ENCODE measurements at regions of chr6 and their contacts with region 1.

Region 1: GRCh38 chr6:105992315-105992961 is 93.7 kb upstream of the PRDM1 start:
- DNase-seq: peak; percentile 98
- H3K4me3 Mint-ChIP-seq: peak overlapping the region; percentile 93
- H3K27ac Mint-ChIP-seq: peak overlapping the region; percentile 91
- H3K4me1 Mint-ChIP-seq: peaks cover 45% of the 10 kb centered on the region
- H3K27me3 Mint-ChIP-seq: peaks cover 37% of the 10 kb centered on the region

Region 2: DNA sequence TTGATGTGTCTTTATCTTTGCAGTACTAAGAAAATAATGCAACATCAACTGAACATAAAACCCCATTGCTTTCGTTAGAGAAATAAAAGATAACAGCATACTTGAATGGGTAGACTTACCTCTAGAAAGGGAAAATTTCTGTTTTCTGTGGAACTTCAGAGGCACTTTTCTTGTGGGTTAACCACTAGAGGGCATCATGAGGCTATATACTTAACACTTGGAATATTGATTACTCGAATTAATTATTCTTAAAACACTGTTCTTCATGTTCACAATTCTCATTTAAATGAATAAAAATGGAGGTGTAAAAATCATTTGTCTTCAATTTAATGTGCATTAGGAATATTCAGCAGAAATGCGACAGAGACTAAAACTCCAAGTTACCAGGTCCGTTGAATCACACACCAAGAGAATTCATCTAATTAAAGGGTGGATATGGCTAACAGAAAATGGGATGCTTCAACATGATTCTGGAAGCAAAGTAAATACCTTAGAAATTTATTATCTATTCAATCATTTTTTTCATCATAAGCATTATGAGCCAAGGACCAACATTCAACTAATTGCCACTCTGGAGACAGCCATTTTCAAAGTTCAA is 258.8 kb before region 1 on chr6:
- intact Hi-C with region 1: loop called (anchors 5 kb)
- DNase-seq: no peak
- H3K4me3 Mint-ChIP-seq: no peak overlapping the region
- H3K27ac Mint-ChIP-seq: no peak overlapping the region
- H3K4me1 Mint-ChIP-seq: peaks cover 17% of the 10 kb centered on the region
- H3K27me3 Mint-ChIP-seq: peaks cover 2% of the 10 kb centered on the region

Region 3: DNA sequence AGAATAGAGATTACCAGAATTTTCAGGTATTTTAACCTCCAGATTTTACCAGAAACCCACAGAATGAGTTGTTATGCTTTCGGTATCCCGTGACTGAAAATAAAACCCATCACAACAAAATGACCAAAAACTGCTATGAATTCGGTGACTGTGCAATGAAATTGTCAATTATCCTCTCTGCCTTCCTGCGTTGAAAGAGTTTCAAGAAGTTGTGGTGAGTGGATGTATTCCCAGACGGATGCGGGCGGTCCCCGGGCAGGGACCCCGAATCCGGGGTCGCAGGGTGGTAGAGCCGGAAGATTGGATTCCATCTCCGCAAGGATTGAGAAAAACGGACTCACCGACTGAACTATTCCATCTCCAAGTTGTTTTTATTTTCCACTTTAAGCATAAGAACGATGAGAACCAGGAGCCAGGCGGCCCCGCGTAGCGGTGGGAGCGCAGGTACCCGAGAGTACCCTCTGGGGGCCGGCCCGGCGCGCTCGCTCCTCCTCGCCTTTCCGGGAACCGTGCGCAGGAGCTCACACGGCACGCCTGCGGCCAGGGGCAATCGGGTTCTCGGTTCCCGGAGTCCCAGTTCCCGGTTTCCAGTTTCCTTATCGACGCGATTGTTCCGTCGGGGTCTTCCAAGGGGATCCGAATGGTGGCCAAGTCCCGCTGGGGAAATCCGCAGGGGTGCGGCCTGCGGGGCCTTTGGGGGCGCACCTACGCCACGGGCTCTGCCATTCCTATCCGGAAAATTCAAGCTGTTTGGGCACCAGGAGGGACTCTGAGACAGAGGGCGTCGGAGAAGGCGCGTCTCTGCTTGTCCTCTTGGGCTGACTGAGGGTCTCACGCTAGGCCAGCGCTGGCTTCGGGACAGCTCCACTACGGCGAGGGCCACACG is 11.2 kb before region 1 on chr6:
- intact Hi-C with region 1: loop called (anchors 1 kb)
- DNase-seq: peak; percentile 86
- H3K4me3 Mint-ChIP-seq: peak overlapping the region; percentile 78
- H3K27ac Mint-ChIP-seq: peak overlapping the region; percentile 84
- H3K4me1 Mint-ChIP-seq: peaks cover 54% of the 10 kb centered on the region
- H3K27me3 Mint-ChIP-seq: peaks cover 6% of the 10 kb centered on the region

Region 4: GRCh38 chr6:106163446-106163965 is 171.1 kb after region 1 on chr6:
- intact Hi-C with region 1: loop called (anchors 1 kb)
- DNase-seq: peak; percentile 88
- H3K4me3 Mint-ChIP-seq: peak overlapping the region; percentile 71
- H3K27ac Mint-ChIP-seq: peak overlapping the region; percentile 92
- H3K4me1 Mint-ChIP-seq: peaks cover 53% of the 10 kb centered on the region
- H3K27me3 Mint-ChIP-seq: no peaks in the 10 kb centered on the region

Region 5: GRCh38 chr6:106223300-106223930 is 231.0 kb after region 1 on chr6:
- intact Hi-C with region 1: loop called (anchors 2 kb)
- DNase-seq: peak; percentile 91
- H3K4me3 Mint-ChIP-seq: no peak overlapping the region
- H3K27ac Mint-ChIP-seq: no peak overlapping the region
- H3K4me1 Mint-ChIP-seq: peaks cover 32% of the 10 kb centered on the region
- H3K27me3 Mint-ChIP-seq: no peaks in the 10 kb centered on the region

Region 6: DNA sequence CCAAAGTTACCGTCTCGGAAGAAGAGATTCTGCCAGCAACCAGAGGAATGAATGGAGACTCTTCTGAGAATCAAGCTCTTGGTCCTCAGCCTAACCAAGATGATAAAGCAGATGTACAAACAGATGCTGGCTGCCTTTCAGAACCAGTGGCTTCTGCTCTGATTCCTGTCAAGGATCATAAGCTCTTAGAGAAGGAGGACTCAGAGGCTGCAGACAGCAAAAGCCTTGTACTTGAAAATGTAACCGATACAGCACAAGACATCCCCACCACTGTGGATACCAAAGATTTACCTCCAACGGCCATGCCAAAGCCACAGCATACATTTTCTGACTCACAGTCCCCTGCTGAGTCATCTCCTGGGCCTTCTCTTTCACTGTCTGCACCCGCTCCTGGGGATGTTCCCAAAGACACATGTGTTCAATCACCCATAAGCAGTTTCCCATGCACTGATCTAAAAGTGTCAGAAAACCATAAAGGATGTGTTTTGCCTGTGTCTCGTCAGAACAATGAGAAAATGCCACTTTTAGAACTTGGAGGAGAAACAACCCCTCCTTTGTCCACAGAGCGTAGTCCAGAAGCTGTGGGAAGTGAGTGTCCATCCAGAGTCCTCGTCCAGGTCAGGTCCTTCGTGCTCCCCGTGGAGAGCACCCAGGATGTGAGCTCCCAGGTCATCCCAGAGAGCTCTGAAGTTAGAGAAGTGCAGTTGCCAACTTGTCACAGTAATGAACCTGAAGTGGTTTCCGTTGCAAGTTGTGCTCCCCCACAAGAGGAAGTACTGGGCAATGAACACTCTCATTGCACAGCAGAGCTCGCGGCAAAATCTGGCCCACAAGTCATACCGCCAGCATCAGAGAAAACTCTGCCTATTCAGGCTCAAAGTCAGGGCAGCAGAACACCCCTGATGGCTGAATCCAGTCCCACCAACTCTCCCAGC is 527.3 kb after region 1 on chr6:
- intact Hi-C with region 1: loop called (anchors 10 kb)
- DNase-seq: peak; percentile 92
- H3K4me3 Mint-ChIP-seq: peak overlapping the region; percentile 80
- H3K27ac Mint-ChIP-seq: peak overlapping the region; percentile 97
- H3K4me1 Mint-ChIP-seq: peaks cover 59% of the 10 kb centered on the region
- H3K27me3 Mint-ChIP-seq: no peaks in the 10 kb centered on the region